ENCODE measurements at regions of chr3 and their contacts with region 1.

Region 1: DNA sequence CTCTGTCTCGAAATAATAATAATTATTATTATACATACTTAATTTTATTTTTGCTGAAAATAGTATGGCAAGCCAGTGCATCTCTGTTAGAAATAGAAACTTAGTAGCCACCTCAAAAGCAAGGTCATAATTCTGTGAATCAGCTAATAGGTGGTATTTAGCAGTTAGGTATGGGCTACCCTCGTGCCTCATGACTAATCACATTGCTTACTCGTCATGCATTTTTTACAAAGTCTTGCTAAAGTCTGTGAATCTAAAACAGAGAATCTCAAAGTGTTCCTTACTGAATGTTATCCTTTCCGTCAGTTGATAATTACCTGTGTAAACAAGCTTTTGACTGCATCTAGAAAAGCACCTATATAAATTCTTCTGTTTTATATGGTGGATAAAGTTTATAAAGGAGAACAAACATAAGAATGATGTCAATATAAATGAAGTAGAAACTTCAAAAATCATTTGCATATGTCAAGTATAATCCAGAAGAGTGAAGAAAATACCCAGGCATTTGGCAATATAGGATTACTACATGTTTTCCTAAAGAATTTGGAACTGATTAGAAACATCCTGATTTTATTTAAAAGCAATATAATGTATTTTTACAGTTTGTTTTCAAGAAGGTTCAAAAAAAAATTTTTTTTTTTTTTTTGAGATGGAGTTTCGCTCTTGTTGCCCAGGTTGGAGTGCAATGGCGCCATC is 6.2 kb downstream of the PPARG start:
- DNase-seq: no peak
- H3K4me3 ChIP-seq: no peak overlapping the region
- H3K27ac ChIP-seq: no peak overlapping the region
- H3K4me1 ChIP-seq: no peaks in the 10 kb centered on the region
- CTCF ChIP-seq: no peak

Region 2: DNA sequence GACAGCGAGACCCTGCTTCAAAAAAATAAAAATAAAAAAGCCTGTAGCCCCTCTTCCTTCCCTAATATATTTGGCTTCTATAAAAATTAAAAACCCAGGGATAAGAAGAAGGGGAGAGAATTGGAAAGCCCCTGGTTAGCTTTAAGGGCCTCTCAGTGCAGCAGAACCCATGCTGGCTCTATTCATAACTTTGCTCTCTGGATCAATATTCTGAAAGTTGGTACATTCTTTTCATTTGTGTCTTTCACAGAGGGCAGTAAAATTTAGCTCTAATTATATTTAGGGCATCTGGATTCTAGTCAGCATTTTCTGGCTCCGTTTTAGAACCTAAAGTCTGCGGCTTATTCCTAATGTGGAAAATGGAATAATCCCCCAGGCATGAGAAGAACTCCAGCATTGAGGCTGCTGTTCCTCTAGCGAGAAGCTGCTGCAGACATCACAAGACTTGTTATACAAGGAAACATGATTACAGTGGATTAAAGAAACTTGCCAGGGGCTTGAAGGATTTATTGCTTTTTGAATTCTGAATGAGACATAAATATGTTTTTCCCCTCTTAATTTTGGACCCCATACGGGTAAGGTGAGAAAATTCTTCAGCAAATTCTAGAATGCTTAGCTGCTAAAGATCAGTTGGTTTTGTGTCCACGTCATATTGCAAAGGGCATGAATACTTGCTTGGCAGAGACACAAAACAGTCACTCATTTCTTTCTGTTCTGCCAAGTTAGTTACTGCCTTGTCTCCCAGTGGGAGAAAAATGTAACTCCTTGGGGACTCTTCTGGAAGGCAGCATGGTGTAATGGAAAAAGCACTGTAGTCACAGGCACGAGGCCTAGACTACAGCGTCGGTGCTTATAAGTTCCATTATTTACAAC is 829.1 kb before region 1 on chr3:
- CTCF ChIA-PET with region 1: no interaction called
- POLR2A ChIA-PET with region 1: no interaction called
- intact Hi-C with region 1: no loop called
- DNase-seq: no peak
- H3K4me3 ChIP-seq: no peak overlapping the region
- H3K27ac ChIP-seq: no peak overlapping the region
- H3K4me1 ChIP-seq: no peaks in the 10 kb centered on the region
- CTCF ChIP-seq: no peak

Region 3: DNA sequence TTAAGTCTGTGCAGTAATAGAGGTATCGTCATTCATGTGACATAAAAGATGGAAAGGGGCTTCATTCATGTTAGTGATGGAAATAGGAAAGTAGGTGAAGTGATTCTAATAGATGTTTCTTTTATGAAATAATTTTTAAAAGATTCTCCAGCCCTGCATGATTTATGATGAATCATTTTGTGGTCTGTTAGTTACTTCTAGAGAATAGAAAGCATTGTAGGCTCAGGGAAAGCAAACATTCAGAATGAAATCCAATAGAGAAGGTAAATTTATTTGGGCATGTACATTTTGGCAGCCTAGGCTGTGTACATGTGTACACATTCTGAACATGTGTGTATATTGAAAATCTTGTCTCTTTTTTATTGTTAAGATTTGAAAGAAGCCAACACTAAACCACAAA is 17.0 kb after region 1 on chr3:
- CTCF ChIA-PET with region 1: no interaction called
- POLR2A ChIA-PET with region 1: no interaction called
- intact Hi-C with region 1: loop called (anchors 1 kb)
- DNase-seq: no peak
- H3K4me3 ChIP-seq: no peak overlapping the region
- H3K27ac ChIP-seq: no peak overlapping the region
- H3K4me1 ChIP-seq: no peaks in the 10 kb centered on the region
- CTCF ChIP-seq: no peak